CD4-positive, alpha-beta T cell (primary cell): ENCODE measurements at regions of chr10 and their contacts with region 1.

Region 1: DNA sequence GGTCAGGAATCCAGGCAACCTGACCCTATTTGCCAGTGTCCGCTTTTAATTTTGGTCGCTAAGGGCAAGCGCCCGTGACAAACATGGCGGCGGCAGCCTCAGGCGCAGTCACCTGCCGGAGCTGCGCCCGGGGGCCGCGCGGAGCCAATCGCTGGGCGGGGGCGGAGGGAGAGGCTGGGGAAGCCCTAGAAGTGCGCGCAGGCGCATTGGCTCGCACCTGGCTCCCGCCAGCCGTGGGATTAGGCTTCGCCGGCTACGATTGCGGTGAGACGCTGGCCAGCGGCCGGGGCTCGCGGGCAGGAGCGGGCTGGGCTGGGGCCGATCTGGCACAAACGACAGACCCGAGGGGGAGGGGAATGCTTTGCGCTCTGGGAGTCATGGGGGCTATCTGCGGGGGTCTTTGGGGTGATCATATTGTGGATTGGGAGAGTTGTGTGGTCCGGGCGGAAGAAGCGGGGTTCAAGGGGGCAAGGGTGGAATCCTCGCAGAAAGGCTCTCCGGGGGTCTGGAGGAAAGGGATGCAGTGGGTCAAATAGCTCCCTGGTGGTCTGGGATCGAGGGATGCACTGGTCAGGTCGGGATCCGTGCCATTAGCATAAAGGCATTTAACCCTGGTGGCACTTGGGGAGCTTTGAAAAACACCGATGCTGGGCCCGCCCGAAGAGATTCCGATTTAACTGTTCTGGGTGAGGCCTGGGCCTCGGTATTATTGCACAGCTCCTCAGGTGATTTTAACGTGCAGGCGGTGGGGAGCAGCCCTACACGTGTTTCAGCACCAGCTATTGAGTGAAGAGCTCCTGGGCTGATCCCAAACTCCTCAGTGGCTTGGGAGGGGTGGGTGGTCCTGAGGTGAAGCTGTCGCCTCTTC is 10.1 kb upstream of the C10orf95 start:
- DNase-seq: peak; percentile 87 to 97 (median 93)
- ATAC-seq: peak; percentile 100
- H3K4me3 ChIP-seq: peak overlapping the region; percentile 72
- H3K4me3 Mint-ChIP-seq: peak overlapping the region; percentile 92
- H3K27ac ChIP-seq: peak overlapping the region in 1 of 2 donors; percentile 38
- H3K27ac Mint-ChIP-seq: peak overlapping the region; percentile 70
- H3K4me1 ChIP-seq: peaks cover 28% of the 10 kb centered on the region
- H3K4me1 Mint-ChIP-seq: peaks cover 29% of the 10 kb centered on the region
- H3K27me3 ChIP-seq: no peaks in the 10 kb centered on the region
- H3K27me3 Mint-ChIP-seq: no peaks in the 10 kb centered on the region
- CTCF ChIP-seq: no peak

Region 2: GRCh38 chr10:100890673-100891317 is 1570.6 kb before region 1 on chr10:
- CTCF ChIA-PET with region 1: no interaction called
- POLR2A ChIA-PET with region 1: no interaction called
- intact Hi-C with region 1: no loop called
- DNase-seq: no peak
- ATAC-seq: no peak
- H3K4me3 ChIP-seq: no peak overlapping the region
- H3K4me3 Mint-ChIP-seq: no peak overlapping the region
- H3K27ac ChIP-seq: no peak overlapping the region
- H3K27ac Mint-ChIP-seq: no peak overlapping the region
- H3K4me1 ChIP-seq: peaks cover 3% of the 10 kb centered on the region
- H3K4me1 Mint-ChIP-seq: peaks cover 5% of the 10 kb centered on the region
- H3K27me3 ChIP-seq: peaks cover 8 to 14% of the 10 kb centered on the region in 2 experiments
- H3K27me3 Mint-ChIP-seq: peaks cover 41% of the 10 kb centered on the region
- CTCF ChIP-seq: no peak

Region 3: GRCh38 chr10:102322914-102323313 is 138.5 kb before region 1 on chr10:
- CTCF ChIA-PET with region 1: no interaction called
- POLR2A ChIA-PET with region 1: no interaction called
- intact Hi-C with region 1: no loop called
- DNase-seq: peak in 13 of 14 experiments; percentile 1 to 70 (median 21)
- ATAC-seq: peak; percentile 77
- H3K4me3 ChIP-seq: no peak overlapping the region
- H3K4me3 Mint-ChIP-seq: no peak overlapping the region
- H3K27ac ChIP-seq: no peak overlapping the region
- H3K27ac Mint-ChIP-seq: peak overlapping the region; percentile 56
- H3K4me1 ChIP-seq: peaks cover 17% of the 10 kb centered on the region
- H3K4me1 Mint-ChIP-seq: peaks cover 41% of the 10 kb centered on the region
- H3K27me3 ChIP-seq: no peaks in the 10 kb centered on the region
- H3K27me3 Mint-ChIP-seq: no peaks in the 10 kb centered on the region
- CTCF ChIP-seq: no peak

Region 4: GRCh38 chr10:102450194-102450938 is 11.1 kb before region 1 on chr10:
- CTCF ChIA-PET with region 1: interaction called, 19 read pairs
- POLR2A ChIA-PET with region 1: interaction called, 90 read pairs
- intact Hi-C with region 1: loop called in 1 of 2 experiments (anchors 1 kb)
- DNase-seq: peak; percentile 78 to 98 (median 88)
- ATAC-seq: peak; percentile 77
- H3K4me3 ChIP-seq: peak overlapping the region; percentile 83
- H3K4me3 Mint-ChIP-seq: peak overlapping the region; percentile 94
- H3K27ac ChIP-seq: peak overlapping the region; percentile 79 to 80
- H3K27ac Mint-ChIP-seq: peak overlapping the region; percentile 78
- H3K4me1 ChIP-seq: peaks cover 41% of the 10 kb centered on the region
- H3K4me1 Mint-ChIP-seq: peaks cover 21% of the 10 kb centered on the region
- H3K27me3 ChIP-seq: no peaks in the 10 kb centered on the region
- H3K27me3 Mint-ChIP-seq: no peaks in the 10 kb centered on the region
- CTCF ChIP-seq: no peak